H1 (cell line): ENCODE measurements at regions of chr2 and their contacts with region 1.

Region 1: GRCh38 chr2:238362626-238363025 is 42.3 kb downstream of the TRAF3IP1 start:
- DNase-seq: no peak
- H3K4me3 ChIP-seq: no peak overlapping the region
- H3K27ac ChIP-seq: no peak overlapping the region
- H3K4me1 ChIP-seq: no peaks in the 10 kb centered on the region
- H3K27me3 ChIP-seq: no peaks in the 10 kb centered on the region
- CTCF ChIP-seq: no peak
- EP300 ChIP-seq: no peak
- POLR2A ChIP-seq: no peak
- RAD21 ChIP-seq: no peak

Region 2: DNA sequence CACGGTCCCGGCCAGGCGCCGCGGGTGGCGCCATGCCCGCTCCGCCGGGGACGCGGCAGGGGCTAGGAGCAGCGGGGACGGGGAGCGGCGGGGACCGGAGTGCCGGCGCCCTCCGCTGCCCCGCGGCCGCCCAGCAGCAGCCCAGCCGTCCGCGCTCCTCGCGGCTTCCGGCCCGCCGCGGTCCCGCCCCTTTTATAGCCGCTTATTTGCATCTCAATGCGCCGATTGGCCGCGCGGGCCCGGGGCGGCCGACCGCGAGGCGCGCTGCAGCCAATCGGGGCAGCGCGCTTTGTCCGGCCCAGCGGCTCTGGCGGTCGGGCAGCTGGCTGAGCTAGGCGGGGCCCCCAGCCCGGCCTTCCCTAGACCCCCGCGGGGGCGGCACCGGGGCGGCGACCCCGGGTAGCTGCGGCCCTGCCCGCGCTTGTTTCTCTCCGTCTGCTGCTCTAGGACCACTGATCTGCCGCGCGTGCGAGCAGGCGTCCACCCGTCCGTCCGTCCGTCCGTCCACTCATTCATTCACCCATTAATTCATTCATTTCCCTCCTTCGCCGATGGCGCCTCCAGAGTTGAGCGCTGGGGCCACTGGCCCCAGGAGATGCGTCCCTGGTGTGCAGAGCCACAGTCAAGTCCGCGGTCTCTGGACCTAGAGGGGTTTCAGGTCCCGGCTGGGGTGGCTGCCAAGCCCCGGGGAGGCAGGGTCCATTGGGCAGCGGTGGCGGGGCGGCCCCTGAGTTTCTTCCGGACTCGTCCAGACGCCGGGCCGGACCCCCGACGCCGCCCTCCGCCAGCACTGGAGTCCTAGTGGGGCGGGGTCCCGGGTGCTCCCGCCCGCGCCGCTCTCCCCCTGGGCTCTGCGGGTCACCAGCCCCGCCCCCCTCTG is 122.5 kb before region 1 on chr2 and contains the start of gene HES6:
- CTCF ChIA-PET with region 1: no interaction called
- POLR2A ChIA-PET with region 1: no interaction called
- DNase-seq: peak; percentile 75 to 91
- H3K4me3 ChIP-seq: peak within 1 kb of the TSS; percentile 55 to 81 (median 60)
- H3K27ac ChIP-seq: 0 out of 2 replicates have a peak within 1 kb of the TSS, but pooled peaks have one; percentile 28
- H3K4me1 ChIP-seq: peaks cover 3 to 15% (median 7%) of the 10 kb centered on the region in 4 experiments
- H3K27me3 ChIP-seq: peaks cover 11 to 57% (median 47%) of the 10 kb centered on the region in 4 experiments
- CTCF ChIP-seq: 0 out of 4 replicates have a peak, but pooled peaks of 1 of the 3 experiments have one; percentile 9
- EP300 ChIP-seq: no peak
- POLR2A ChIP-seq: peak in 1 of 2 experiments; percentile 92; a peak in 2 of 3 replicates
- RAD21 ChIP-seq: no peak
- total RNA-seq, gene HES6: 35.2 and 36.3 TPM in 2 replicates

Region 3: DNA sequence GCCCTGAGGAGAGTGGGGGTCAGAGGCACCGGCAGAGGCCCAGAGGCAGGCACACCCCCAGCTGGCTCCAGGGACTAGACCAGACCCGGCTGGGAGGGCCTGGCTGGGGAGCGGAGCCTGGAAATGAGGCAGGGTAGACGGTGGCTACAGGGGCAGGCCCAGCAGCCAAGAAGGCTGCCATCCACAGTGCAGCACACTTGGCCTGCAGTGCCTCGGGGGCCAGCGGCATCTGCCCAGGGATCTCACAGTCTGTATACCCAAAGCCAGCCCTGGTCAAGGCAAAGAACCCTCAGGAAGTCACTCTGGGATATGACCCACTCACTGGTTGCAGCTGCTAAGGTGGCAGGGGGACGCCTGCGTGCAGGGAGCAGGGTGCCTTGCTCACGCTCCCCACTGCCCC is 92.0 kb before region 1 on chr2:
- CTCF ChIA-PET with region 1: no interaction called
- POLR2A ChIA-PET with region 1: no interaction called
- DNase-seq: no peak
- H3K4me3 ChIP-seq: no peak overlapping the region
- H3K27ac ChIP-seq: no peak overlapping the region
- H3K4me1 ChIP-seq: no peaks in the 10 kb centered on the region
- H3K27me3 ChIP-seq: no peaks in the 10 kb centered on the region
- CTCF ChIP-seq: no peak
- EP300 ChIP-seq: no peak
- POLR2A ChIP-seq: no peak
- RAD21 ChIP-seq: no peak

Region 4: DNA sequence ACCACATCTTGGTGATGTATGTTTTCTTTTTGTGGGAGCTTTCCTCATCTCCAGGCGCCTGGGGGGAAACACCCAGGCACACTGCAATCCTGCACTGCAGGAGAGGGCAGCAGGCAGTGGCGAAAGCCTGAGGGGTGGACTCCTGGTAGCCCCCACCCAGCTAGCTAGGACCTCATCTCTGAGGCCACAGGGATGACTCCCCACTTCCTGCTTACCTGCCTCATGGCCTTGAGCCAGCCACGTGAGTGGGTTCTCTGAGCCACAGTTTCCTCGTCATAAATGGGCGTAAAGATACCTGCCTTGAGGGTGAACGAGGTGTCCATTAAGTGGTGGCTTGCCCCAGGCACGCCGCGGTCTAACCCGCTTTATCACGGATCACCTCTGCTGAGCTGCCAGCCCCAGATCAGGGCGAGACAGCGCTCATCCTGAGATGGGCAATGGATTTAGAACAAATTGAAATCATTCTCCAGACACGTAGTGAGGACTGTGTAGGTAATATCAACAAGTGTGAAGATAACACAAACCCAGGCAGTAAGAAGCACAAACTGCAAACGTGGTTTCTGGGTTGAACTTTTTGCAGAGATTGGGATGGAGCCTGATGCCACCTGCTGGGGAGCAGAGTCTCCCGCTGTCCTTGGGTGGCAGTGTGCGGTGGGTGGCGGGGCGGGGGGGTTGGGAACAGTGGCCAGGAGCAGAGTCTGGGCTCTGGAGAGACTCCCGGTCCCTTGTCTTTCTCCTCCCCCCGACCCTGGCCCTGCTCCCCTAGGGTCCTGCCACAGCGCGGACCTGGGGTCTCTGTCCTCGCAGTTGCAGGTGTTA is 23.0 kb before region 1 on chr2:
- CTCF ChIA-PET with region 1: interaction called, 29 read pairs
- POLR2A ChIA-PET with region 1: no interaction called
- DNase-seq: no peak
- H3K4me3 ChIP-seq: no peak overlapping the region
- H3K27ac ChIP-seq: no peak overlapping the region
- H3K4me1 ChIP-seq: 0 out of 7 replicates have a peak, but pooled peaks cover 0 to 2% (median 0%) of the 10 kb centered on the region in 4 experiments
- H3K27me3 ChIP-seq: no peaks in the 10 kb centered on the region
- CTCF ChIP-seq: no peak
- EP300 ChIP-seq: no peak
- POLR2A ChIP-seq: no peak
- RAD21 ChIP-seq: no peak

Region 5: GRCh38 chr2:238346544-238346943 is 16.1 kb before region 1 on chr2:
- CTCF ChIA-PET with region 1: interaction called, 29 read pairs
- POLR2A ChIA-PET with region 1: no interaction called
- DNase-seq: no peak
- H3K4me3 ChIP-seq: no peak overlapping the region
- H3K27ac ChIP-seq: no peak overlapping the region
- H3K4me1 ChIP-seq: 0 out of 7 replicates have a peak, but pooled peaks cover 0 to 2% (median 0%) of the 10 kb centered on the region in 4 experiments
- H3K27me3 ChIP-seq: no peaks in the 10 kb centered on the region
- CTCF ChIP-seq: no peak
- EP300 ChIP-seq: no peak
- POLR2A ChIP-seq: no peak
- RAD21 ChIP-seq: no peak

Region 6: DNA sequence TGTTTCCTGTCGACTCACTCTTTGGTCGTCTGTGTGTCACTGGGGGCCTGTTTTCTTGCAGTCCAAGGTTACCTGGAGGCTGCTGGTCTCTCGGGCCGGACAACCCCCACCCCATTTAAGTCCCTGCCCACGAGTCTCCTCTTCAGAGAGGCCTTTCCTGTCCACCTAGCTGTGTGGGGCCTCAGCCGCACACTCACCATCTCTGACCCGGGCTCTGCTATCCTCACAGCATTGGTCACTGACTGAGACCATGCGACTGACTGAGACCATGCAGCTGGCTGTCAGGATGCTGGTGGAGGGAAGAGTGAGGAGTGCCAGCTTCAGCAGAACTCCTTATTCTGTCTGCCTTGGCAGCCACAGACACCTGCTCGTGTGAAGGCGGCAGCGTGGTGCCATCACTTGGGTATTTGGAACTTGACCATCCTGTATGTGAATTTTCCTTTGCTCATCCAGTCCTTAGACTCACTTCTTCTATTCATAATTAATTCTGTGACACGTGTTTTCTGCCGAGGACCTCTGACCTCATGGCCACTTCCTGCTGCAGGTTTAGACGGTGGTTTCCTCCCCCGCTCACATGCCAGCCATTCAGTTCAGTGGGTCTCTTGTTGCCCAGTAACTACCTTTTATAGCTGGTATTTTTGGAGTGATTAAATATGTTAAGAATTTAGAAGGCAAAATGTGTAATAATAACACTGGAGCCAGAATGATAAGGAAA is 16.6 kb after region 1 on chr2:
- CTCF ChIA-PET with region 1: interaction called, 15 read pairs
- POLR2A ChIA-PET with region 1: interaction called, 4 read pairs
- DNase-seq: no peak
- H3K4me3 ChIP-seq: no peak overlapping the region
- H3K27ac ChIP-seq: no peak overlapping the region
- H3K4me1 ChIP-seq: peaks cover 3 to 21% (median 12%) of the 10 kb centered on the region in 4 experiments
- H3K27me3 ChIP-seq: no peaks in the 10 kb centered on the region
- CTCF ChIP-seq: no peak
- EP300 ChIP-seq: no peak
- POLR2A ChIP-seq: no peak
- RAD21 ChIP-seq: no peak

Region 7: DNA sequence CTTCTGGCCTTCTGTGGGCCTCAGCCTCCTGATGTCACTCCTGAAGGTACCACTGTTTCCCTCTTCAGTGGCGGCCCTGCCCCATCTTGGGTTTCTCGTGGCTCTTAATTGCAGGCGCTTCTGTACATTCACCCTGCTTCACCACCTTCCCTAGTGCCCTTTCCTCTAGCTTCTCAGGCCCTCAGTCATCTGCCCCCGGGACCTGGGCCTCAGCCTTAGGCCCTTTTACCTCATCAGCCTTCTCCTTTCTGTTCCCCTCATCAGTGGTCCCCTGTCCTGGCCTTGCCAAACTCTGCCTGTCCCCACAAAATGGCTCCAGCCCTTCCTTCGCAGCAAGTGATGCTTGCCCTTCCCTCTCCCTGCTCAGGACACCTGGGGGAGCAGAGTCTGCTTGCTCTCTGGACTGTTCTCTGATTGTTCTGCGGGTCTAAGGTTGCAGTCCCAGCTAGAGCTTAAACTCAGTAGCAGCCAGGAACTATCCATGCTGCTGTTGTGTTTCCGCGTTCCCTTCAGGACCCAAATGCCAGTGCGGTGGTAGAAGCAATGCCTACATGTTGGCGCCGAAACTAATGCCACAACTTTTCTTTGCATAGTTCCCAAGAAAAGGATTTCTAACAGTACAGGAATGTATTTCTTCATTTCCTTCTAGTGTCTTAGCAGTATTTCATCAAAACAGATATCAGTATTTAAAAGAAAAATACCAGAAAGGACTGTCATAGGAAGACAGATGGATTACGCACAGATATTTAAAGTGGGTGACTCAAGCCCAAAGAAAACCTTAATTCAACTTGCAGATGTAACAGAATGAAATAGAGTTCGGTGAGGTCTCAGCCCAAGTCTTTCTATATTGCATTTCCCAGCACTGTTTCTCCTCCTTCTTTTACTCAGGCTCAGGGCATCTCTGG is 71.6 kb after region 1 on chr2:
- CTCF ChIA-PET with region 1: interaction called, 68 read pairs
- POLR2A ChIA-PET with region 1: no interaction called
- DNase-seq: no peak
- H3K4me3 ChIP-seq: no peak overlapping the region
- H3K27ac ChIP-seq: no peak overlapping the region
- H3K4me1 ChIP-seq: no peaks in the 10 kb centered on the region
- H3K27me3 ChIP-seq: no peaks in the 10 kb centered on the region
- CTCF ChIP-seq: no peak
- EP300 ChIP-seq: no peak
- POLR2A ChIP-seq: no peak
- RAD21 ChIP-seq: no peak